Activated CD4-positive, alpha-beta memory T cell treated with anti-CD3 and anti-CD28 coated beads for 36 hours (primary cell): ENCODE measurements at regions of chr2 and their contacts with region 1.

Region 1: GRCh38 chr2:191038241-191038725 is 24.3 kb upstream of the STAT1 start:
- DNase-seq: peak; percentile 63
- H3K4me3 Mint-ChIP-seq: no peak overlapping the region
- H3K27ac Mint-ChIP-seq: peak overlapping the region; percentile 68
- H3K4me1 Mint-ChIP-seq: peaks cover 48% of the 10 kb centered on the region
- H3K27me3 Mint-ChIP-seq: no peaks in the 10 kb centered on the region

Region 2: GRCh38 chr2:191020221-191020741 is 18.0 kb before region 1 on chr2:
- CTCF ChIA-PET with region 1: interaction called, 3 read pairs
- POLR2A ChIA-PET with region 1: interaction called, 7 read pairs
- intact Hi-C with region 1: loop called (anchors 1 kb)
- DNase-seq: peak; percentile 97
- H3K4me3 Mint-ChIP-seq: no peak overlapping the region
- H3K27ac Mint-ChIP-seq: no peak overlapping the region
- H3K4me1 Mint-ChIP-seq: peaks cover 34% of the 10 kb centered on the region
- H3K27me3 Mint-ChIP-seq: peaks cover 2% of the 10 kb centered on the region